A549 (cell line): ENCODE measurements at regions of chr1 and their contacts with region 1.

Region 1: GRCh38 chr1:208245185-208245705 is 1.1 kb upstream of the PLXNA2 start:
- DNase-seq: peak; percentile 84 to 90
- ATAC-seq: peak; percentile 64 to 86
- H3K4me3 ChIP-seq: peak overlapping the region; percentile 69
- H3K27ac ChIP-seq: peak overlapping the region; percentile 11 to 12; a peak in 2 of 6 replicates
- H3K4me1 ChIP-seq: peaks cover 15% of the 10 kb centered on the region
- CTCF ChIP-seq: peak; percentile 86
- EP300 ChIP-seq: no peak
- POLR2A ChIP-seq: no peak
- RAD21 ChIP-seq: peak; percentile 85 to 88

Region 2: GRCh38 chr1:208029381-208030287 is 215.6 kb before region 1 on chr1:
- CTCF ChIA-PET with region 1: interaction called, 358 read pairs
- POLR2A ChIA-PET with region 1: no interaction called
- DNase-seq: no peak
- ATAC-seq: no peak; a peak in 1 of 6 replicates
- H3K4me3 ChIP-seq: no peak overlapping the region
- H3K27ac ChIP-seq: no peak overlapping the region
- H3K4me1 ChIP-seq: no peaks in the 10 kb centered on the region
- CTCF ChIP-seq: no peak
- EP300 ChIP-seq: no peak
- POLR2A ChIP-seq: no peak
- RAD21 ChIP-seq: no peak

Region 3: DNA sequence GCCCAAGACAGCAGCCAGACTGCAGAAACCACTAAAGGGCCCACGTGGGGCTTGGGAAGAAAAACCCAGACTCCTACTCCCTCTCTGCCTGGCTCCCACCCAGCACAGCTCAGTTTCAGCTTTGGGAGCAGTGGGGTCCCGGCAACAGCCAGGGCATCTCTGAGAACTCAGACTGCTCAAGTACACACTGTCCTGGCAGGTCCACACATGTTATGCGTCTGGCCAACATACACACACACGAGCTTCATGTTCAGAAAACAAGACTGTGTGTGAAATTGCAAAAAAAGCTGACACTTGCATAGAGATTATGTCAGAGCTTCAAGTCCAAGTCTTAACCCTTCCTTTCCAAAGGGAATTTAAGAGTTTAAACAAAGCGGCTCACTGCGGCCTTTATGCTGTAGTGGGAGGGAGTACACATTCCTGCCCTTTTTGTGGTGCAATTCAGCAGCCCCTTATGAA is 197.7 kb before region 1 on chr1:
- CTCF ChIA-PET with region 1: interaction called, 21 read pairs
- POLR2A ChIA-PET with region 1: no interaction called
- DNase-seq: no peak
- ATAC-seq: no peak
- H3K4me3 ChIP-seq: no peak overlapping the region
- H3K27ac ChIP-seq: no peak overlapping the region
- H3K4me1 ChIP-seq: no peaks in the 10 kb centered on the region; the same call in 2 of the 3 replicates
- CTCF ChIP-seq: no peak
- EP300 ChIP-seq: no peak
- POLR2A ChIP-seq: no peak
- RAD21 ChIP-seq: no peak

Region 4: DNA sequence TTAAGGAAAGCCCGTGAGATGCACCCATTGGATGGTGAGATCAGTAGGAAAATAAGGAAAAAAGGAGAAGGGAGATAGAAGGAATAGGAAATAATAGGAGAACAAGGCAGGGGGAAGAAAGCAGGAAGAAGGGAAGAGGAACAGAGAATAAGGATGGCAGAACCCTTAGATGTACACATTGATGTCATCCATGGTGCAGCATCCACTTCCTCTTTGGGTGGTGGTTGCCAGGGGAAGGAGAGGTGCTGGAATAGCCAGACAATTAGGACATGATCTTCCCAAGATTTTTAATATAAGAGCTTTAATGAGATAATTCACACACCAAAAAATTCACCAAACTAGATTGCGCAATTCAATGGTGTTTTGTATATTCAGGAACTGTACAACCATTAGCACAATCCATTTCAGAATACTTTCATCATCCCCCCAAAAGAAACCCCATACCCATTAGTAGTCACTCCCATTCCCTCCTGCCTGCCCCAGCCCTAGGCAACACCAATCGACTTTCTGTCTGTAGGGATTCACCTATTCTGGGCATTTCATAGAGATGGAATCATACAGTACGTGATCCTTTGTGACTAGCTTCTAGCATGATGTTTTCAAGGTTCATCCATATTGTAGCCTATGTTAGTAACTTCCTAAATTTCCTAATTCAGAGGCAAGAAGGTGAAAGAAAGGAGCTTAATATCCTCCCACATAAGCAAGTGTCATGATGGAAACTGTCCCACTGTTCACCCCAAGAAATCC is 122.5 kb before region 1 on chr1:
- CTCF ChIA-PET with region 1: interaction called, 417 read pairs
- POLR2A ChIA-PET with region 1: no interaction called
- DNase-seq: no peak
- ATAC-seq: no peak
- H3K4me3 ChIP-seq: no peak overlapping the region
- H3K27ac ChIP-seq: no peak overlapping the region
- H3K4me1 ChIP-seq: peaks cover 10% of the 10 kb centered on the region
- CTCF ChIP-seq: no peak
- EP300 ChIP-seq: no peak
- POLR2A ChIP-seq: no peak
- RAD21 ChIP-seq: no peak

Region 5: DNA sequence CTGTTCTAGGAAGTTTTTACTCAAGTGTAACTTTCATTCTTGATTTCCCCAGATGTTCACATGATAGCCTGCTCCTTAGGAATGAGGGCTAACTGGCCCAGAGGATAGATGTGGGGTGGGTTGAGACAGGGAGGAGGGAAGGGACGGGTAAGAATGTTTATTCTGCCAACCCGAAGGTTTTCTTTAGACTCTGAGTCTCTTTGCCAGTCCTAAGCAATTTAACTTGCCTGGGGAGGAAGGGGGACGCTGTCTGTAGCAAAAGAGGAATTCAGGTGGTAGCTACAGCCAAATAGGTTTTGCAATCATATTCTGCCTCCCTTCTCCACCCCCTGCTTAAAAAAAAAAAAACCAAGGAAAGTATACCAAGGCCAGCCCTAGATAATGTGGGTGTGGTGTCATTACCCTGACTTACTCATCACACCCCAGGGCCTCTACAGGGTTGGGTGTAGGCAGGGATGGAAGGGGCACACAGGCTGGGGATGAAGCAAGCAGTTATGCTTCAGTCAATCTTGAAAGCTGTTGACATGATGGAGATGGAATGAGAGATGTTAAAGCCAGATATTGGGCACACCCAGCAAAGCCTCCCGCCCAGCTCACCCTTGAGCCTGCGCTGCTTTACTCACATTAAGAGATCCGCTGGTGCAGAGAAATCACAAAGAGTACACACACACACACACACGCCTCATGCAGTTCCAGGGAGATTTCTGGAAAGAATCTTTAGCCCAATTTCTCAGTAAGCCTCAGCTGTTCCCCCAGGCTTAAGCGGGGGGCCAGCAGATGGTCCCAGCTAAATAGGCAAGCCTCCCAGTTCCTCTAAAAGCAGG is 60.9 kb before region 1 on chr1:
- CTCF ChIA-PET with region 1: interaction called, 26 read pairs
- POLR2A ChIA-PET with region 1: no interaction called
- DNase-seq: peak; percentile 92 to 95
- ATAC-seq: peak; percentile 96 to 98
- H3K4me3 ChIP-seq: no peak overlapping the region
- H3K27ac ChIP-seq: peak overlapping the region; percentile 66 to 81
- H3K4me1 ChIP-seq: peaks cover 60% of the 10 kb centered on the region
- CTCF ChIP-seq: no peak
- EP300 ChIP-seq: peak; percentile 69 to 79; a peak in 3 of 5 replicates
- POLR2A ChIP-seq: no peak
- RAD21 ChIP-seq: peak in 1 of 2 experiments; percentile 14; a peak in 3 of 5 replicates